Kidney (tissue), 22 donors: ENCODE measurements at regions of chr6 and their contacts with region 1.

Region 1: DNA sequence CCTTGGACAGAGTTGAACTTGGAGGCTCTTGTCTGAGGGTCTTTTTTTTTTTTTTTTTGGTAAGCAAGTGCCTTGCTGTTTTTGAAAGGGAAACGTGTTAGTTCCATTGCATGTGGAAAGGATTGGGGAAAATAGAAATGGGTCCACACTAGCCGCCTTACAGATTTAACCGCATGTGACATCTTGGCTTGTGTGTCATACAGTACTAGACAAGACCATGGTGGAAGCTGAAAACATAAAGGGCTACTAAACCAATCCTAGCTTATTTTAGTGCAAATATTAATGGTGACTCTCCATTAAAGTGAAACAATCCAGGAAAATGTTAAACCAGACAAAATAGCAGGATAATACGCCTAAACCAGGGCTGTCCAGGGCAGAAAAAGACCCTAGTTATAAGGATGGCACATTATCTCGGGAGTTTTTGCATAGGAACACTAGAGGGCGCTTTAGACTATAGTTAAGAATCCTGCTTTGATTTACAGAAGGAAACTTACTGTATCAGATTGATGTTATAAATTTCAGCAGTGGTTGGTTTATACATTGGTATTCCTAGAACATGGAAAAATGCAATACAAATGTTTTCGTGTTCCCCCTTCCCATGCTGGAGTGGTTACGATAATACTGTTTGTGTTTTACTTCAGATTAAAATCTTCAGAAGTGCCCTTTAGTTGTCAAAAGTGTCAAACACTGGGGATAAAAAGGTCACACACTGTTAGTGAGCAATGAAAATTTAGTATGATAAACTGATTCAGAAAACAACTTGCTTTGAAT is 59.8 kb upstream of the DEK start:
- DNase-seq: peak in 2 of 5 donors; percentile 66 to 73
- H3K4me3 ChIP-seq: no peak overlapping the region
- H3K27ac ChIP-seq: no peak overlapping the region
- H3K4me1 ChIP-seq: peaks cover 0 to 10% (median 9%) of the 10 kb centered on the region in 3 donors
- H3K27me3 ChIP-seq: no peaks in the 10 kb centered on the region
- CTCF ChIP-seq: peak; percentile 77

Region 2: DNA sequence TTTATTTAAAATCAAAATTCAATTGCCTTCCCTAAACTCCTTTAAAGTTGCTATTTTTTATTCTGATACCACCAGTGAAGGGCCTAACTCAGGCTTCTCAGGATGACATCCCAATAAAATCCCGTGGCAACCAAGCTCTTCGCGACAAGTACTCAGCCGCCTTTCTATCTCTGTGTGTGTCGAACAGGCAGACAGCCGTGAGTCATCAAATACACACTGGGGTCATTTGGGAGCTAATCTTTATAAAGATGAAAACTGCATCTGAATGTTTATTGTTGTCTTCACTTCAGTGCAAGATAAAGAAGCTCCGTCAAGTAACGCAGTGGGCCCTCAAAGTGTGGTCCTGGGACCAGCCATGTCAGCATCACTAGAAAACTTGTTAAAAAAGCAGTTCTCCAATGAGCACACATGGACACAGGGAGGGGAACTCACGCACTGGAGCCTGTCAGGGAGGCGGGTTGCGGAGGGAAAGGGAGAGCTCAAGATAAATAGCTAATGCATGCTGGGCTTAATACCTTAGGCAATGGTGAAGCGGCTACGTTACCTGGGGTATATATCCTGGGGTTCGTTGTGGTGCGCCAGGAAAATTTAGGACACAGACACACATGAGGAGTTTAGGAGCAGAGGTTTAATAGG is 182.4 kb after region 1 on chr6:
- intact Hi-C with region 1: loop called (anchors 5 kb)
- DNase-seq: peak in 1 of 5 donors; percentile 35
- H3K4me3 ChIP-seq: no peak overlapping the region
- H3K27ac ChIP-seq: no peak overlapping the region
- H3K4me1 ChIP-seq: peaks cover 0 to 9% (median 4%) of the 10 kb centered on the region in 3 donors
- H3K27me3 ChIP-seq: no peaks in the 10 kb centered on the region
- CTCF ChIP-seq: no peak